ENCODE measurements at regions of chr11 and their contacts with region 1.

Region 1: DNA sequence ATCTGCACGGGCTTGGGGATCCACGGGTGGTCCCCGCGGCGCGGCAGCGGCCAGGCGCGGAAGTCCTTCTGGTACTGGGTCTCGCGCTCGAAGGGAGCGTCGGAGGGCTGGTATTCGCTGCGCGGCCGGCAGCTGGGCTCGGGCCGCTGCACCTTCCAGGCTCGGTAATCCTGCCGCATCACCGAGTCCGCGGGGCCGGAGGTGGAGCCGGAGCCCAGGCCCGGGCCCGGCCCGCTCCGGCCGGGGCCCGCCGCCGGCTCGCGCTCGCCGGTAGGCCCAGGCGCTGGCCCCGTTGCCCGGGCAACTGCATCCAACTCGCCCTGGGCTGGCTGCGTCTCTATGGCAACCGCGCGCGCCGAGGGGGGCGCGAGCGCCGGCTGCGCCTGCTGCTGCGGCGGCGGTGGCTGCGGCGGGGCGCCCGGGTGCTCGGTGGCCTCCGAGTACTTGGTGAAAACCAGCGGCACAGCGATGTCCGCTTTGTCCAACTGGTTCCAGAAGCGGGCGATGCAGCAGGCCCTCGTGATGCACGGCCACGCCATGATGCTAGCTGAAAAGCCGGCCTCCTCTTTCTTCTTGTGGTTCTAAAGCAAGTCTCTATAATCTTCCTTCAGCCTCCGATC is 897 bp downstream of the MAP6 start:
- DNase-seq: peak; percentile 26
- H3K4me3 ChIP-seq: peak overlapping the region; percentile 49 to 54
- H3K27ac ChIP-seq: peak overlapping the region; percentile 70
- H3K4me1 ChIP-seq: no peaks in the 10 kb centered on the region
- H3K27me3 ChIP-seq: no peaks in the 10 kb centered on the region
- CTCF ChIP-seq: no peak
- POLR2A ChIP-seq: no peak

Region 2: DNA sequence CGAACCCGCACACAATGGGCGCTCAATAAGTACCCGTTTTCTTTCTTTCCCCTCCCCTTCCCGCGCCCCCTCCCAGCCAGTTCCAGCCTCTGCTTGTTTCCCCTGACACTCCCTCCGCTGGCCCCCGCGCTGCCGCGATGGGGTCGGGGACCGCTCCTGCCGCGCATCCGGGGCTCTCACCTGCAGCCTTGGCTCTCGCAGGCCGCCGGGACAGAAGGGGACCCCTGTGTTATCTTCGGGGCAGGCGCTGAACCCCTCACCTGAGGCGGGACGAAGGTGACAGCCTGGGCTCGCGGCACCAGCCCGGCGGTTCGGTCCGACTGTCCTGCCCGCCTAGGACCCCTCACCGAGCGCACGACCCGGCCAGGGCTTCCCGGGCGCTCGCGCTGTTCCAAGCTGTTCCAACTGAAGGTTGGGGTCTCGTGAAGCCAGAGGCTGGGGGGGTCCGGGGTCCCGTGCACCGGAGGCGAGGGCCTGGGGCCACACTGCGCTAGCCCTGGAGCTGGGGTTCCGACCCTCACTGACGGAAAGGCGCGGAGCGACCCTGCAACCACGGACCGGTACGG is 142.8 kb before region 1 on chr11:
- intact Hi-C with region 1: no loop called
- DNase-seq: no peak
- H3K4me3 ChIP-seq: peak overlapping the region; percentile 56
- H3K27ac ChIP-seq: peak overlapping the region; percentile 39 to 52
- H3K4me1 ChIP-seq: peaks cover 2% of the 10 kb centered on the region
- H3K27me3 ChIP-seq: no peaks in the 10 kb centered on the region
- CTCF ChIP-seq: no peak
- POLR2A ChIP-seq: no peak

Region 3: GRCh38 chr11:75582895-75583717 is 84.8 kb before region 1 on chr11:
- intact Hi-C with region 1: loop called (anchors 10 kb)
- DNase-seq: no peak
- H3K4me3 ChIP-seq: peak overlapping the region; percentile 57 to 67
- H3K27ac ChIP-seq: peak overlapping the region; percentile 87 to 89
- H3K4me1 ChIP-seq: no peaks in the 10 kb centered on the region
- H3K27me3 ChIP-seq: no peaks in the 10 kb centered on the region
- CTCF ChIP-seq: peak in 2 of 4 experiments; percentile 20 to 44
- POLR2A ChIP-seq: no peak

Region 4: DNA sequence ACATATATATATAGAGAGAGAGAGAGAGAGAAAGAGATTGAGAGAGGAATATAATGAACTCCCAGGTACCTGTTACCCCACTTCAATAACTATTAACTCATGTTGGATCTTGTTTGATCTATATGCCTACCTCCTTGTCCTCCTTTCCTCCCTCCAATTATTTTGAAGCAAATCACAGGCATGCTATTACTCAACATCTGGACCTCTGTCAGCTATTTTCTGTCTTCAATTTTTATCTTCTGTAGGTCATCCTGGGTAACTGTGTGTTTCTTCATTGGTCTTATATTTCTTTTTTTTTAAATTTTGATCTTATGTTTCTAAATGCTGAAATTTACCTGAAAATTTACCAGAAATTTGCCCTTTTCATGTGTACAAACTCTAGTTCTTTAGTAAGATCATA is 171.9 kb after region 1 on chr11:
- intact Hi-C with region 1: no loop called
- DNase-seq: no peak
- H3K4me3 ChIP-seq: no peak overlapping the region
- H3K27ac ChIP-seq: no peak overlapping the region
- H3K4me1 ChIP-seq: no peaks in the 10 kb centered on the region
- H3K27me3 ChIP-seq: no peaks in the 10 kb centered on the region
- CTCF ChIP-seq: no peak
- POLR2A ChIP-seq: no peak

Measured in prostate gland (tissue), 2 donors.